Activated CD4-positive, alpha-beta T cell treated with anti-CD3 and anti-CD28 coated beads, Interleukin-2, amount 10 ng/mL, durations not matched to agents 7 days and 5 days (primary cell): ENCODE measurements at regions of chr6 and their contacts with region 1.

Region 1: GRCh38 chr6:89610149-89610642 is 28.4 kb downstream of the LYRM2 start:
- DNase-seq: peak; percentile 81
- H3K4me3 Mint-ChIP-seq: no peak overlapping the region
- H3K27ac Mint-ChIP-seq: no peak overlapping the region
- H3K4me1 Mint-ChIP-seq: peaks cover 17% of the 10 kb centered on the region
- H3K27me3 Mint-ChIP-seq: no peaks in the 10 kb centered on the region

Region 2: GRCh38 chr6:88047510-88048150 is 1562.6 kb before region 1 on chr6 and contains the start of gene SPACA1:
- CTCF ChIA-PET with region 1: no interaction called
- POLR2A ChIA-PET with region 1: no interaction called
- DNase-seq: no peak
- H3K4me3 Mint-ChIP-seq: no peak within 1 kb of the TSS
- H3K27ac Mint-ChIP-seq: no peak within 1 kb of the TSS
- H3K4me1 Mint-ChIP-seq: peaks cover 2% of the 10 kb centered on the region
- H3K27me3 Mint-ChIP-seq: peaks cover 30% of the 10 kb centered on the region
- total RNA-seq, gene SPACA1: not detected

Region 3: GRCh38 chr6:89432875-89433251 is 177.3 kb before region 1 on chr6 and contains the start of gene ANKRD6:
- CTCF ChIA-PET with region 1: interaction called, 19 read pairs
- POLR2A ChIA-PET with region 1: no interaction called
- DNase-seq: peak; percentile 74
- H3K4me3 Mint-ChIP-seq: peak within 1 kb of the TSS; percentile 80
- H3K27ac Mint-ChIP-seq: peak within 1 kb of the TSS; percentile 71
- H3K4me1 Mint-ChIP-seq: peaks cover 24% of the 10 kb centered on the region
- H3K27me3 Mint-ChIP-seq: peaks cover 41% of the 10 kb centered on the region
- total RNA-seq, gene ANKRD6: 3.3 to 4.8 TPM

Region 4: DNA sequence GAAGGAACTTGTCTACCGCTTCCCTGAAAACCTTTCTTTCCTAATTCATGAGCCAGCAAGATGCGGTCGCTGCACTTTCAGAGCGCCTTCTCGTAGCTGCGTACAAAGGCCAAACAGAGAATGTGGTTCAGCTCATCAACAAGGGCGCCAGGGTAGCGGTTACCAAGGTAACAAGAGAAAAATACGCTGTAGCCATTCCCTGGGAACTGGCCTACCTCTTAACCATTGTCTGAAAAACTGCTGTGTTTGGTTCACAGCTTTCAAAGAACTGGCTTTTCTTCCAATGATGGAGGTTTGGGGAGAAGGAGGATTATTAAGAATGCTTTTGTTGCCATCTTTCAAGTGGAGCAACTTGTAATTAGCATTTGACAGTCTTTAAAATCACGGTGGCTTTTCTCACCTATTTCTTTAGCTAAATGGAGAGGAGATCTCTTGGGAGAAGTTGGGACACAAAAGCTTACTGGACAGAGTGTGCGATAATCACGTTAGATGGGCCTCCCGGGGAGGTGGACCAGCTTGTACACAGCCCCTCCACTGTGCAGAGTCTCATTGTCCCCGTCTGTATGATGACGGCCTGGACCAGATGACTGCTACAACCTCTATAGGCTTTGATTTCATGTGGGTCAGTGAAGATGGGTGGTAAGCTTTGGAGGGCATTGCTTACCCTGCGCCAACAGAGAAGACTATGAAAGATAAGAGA is 43.1 kb before region 1 on chr6:
- CTCF ChIA-PET with region 1: no interaction called
- POLR2A ChIA-PET with region 1: interaction called, 12 read pairs
- DNase-seq: no peak
- H3K4me3 Mint-ChIP-seq: no peak overlapping the region
- H3K27ac Mint-ChIP-seq: no peak overlapping the region
- H3K4me1 Mint-ChIP-seq: no peaks in the 10 kb centered on the region
- H3K27me3 Mint-ChIP-seq: peaks cover 1% of the 10 kb centered on the region

Region 5: DNA sequence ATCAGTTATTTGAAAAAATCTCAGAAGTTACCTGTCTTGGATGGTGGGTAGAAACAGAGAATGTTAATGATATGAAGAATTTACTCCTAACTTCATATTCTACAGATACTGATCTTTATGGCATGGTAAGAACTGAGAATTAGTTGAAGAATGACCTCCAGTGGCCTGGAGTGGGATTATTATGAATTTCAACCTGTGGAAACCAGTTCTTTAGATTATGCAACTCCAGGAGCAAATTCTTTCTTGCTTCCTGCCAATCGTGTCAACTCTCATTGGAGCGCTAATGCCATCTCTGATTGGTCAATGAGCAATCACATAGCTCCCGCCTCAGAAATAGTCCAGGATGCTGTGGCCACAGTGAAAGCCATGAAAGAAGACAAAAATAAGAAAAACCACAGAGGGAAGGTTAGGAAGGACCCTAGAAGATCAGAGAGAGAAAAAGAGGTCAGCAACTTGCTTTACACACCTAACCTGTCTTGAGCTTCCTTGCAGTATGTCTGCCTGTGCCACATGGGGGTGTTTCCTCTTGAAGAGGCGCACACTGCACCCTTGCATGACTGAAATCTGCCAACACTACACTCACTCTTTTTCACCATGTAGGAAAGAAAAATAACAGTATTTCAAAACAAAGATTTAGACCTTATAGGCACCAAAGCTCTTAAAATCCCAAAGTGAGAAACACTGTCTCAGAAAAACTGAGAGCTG is 12.1 kb before region 1 on chr6:
- CTCF ChIA-PET with region 1: interaction called, 13 read pairs
- POLR2A ChIA-PET with region 1: no interaction called
- DNase-seq: no peak
- H3K4me3 Mint-ChIP-seq: no peak overlapping the region
- H3K27ac Mint-ChIP-seq: peak overlapping the region; percentile 81
- H3K4me1 Mint-ChIP-seq: peaks cover 38% of the 10 kb centered on the region
- H3K27me3 Mint-ChIP-seq: no peaks in the 10 kb centered on the region